Cardiac septum (tissue), 1 donor: ENCODE measurements at regions of chr20 and their contacts with region 1.

Region 1: DNA sequence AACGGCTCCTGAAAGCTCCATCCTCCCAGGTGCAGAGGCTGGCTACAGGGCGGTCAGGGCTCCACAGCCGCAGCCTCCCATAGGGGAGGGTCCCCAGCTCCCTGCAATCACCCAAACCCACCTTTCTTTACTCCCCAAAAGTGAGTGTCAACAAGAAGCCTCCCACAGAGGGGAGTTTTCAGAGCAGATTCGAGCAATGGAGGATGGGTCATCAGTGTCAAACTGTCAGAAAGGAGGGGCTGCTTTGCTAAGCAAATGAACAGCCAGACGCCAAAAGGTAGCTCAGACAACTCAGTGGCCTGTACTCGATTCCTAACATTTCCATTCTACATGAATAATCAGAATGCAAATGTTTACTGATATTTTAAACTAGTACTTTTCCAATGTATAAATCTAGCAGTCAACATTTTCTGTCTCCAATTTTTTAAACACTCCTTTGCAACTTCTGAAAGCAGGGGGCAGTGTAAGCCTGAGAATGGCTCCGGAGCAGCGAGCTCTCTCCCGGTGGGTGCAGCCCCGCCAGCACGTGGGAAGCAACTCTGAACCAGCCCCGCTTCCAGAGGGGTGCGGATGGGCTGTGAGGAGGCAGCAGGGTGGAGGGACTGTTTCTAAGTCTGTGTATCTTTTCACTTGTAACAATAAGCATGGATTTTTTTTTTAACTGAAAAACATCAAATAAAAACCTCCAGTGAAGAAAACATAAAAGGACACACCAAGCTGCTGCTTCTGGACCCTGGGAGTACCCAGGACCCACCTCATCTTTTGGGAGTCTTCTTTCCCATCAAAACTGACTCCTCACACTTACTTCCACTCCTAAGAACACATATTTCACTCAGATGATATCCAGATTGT is 54.9 kb downstream of the TAF4 start:
- DNase-seq: peak; percentile 80

Region 2: DNA sequence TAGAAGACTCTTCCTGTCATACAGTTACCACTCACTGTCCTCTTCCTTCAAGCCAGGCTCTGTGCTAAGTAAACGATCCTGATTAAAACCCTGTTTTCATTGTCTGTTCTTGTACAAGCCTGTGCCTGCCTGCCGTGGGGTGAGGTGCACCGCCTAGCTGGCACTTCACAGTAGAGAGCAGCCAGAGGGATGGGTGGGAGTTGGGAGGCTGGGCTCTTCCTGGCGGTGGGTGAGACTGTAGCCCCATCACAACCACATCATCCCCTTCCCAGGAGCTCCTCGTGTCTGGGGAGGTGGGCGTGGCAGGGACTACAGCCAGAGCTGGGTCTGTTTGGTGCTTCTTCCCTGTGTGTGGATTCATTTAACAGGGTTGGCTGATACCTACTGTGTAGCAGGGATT is 327.1 kb before region 1 on chr20:
- intact Hi-C with region 1: no loop called
- DNase-seq: no peak

Region 3: GRCh38 chr20:61874501-61875026 is 136.2 kb before region 1 on chr20:
- intact Hi-C with region 1: no loop called
- DNase-seq: no peak

Region 4: DNA sequence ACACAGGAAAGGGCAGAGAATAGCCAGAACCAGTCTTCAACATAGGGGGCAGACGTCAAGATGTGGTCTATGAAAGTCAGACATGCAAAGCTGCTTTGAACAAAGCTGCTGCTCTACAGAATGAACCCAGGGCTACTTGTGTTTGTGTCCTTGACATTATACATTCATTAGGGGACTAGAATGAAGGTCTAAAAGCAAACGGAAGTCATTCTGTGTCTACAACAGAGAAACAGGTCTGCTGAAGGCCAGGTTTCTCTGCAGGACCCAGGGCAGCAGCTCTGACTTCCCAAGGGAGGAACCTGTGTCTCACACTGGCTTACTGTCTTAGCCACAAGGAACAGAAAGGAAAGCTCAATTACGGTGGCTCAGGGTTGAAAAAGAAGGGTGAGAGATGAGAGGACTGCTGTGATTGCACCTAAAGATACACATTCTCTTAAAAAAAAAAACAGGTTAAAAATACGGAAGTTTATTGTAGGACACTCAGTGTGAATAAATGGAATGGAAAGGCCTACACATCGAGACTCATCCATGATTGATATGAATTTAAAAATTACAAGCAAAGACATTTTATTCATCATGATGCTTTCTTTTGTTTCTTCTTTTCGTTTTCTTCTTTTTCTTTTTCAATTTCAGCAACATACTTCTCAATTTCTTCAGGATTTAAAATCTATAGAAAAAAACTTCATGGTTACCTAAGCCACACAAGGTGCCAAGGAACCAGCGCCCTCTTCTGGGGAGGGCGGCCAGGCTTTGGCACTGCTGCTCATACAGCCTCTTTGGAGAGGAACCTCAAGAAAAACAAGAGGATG is 125.7 kb after region 1 on chr20:
- intact Hi-C with region 1: loop called (anchors 5 kb)
- DNase-seq: no peak

Region 5: DNA sequence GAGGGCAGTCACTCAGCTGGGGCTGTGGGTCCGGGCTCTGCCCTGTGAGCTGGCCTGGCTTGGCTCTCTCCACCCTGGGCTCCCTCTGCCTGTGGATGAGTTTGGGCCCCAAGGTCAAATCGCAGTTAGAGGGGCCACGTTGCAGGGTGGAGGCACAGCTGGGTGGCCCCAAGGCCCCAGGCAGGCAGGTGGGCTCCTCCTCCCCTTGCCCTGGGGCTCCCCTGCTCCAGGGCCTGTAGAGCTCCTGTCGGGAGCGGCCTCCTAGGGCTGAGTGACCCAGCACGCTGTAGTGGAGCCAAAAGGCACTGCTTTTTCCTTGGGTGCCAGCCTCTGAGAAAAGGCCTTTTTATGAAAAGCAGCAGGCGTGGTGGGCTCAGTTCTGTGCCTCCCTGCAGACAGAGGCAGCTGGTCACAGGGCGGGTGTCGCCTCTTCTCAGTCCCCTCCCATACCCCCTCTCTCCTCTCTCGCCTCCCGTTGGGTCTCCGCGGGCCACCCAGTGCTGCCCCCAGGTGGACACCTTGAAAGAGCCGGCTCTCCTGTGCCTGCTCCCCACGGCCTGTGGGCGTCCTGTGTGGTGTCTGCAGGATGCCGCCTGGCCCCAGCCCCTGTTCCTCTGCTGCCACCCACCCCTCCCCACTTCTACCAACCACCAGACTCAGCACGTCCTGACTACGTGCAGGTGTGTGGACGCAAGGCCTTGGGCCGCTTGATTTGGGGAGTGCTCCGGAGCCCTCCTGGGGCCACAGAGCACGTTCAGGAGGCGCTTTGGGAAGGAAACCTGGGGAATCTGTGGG is 146.0 kb after region 1 on chr20:
- intact Hi-C with region 1: loop called (anchors 5 kb)
- DNase-seq: peak; percentile 88